ENCODE measurements at regions of chr12 and their contacts with region 1.

Region 1: DNA sequence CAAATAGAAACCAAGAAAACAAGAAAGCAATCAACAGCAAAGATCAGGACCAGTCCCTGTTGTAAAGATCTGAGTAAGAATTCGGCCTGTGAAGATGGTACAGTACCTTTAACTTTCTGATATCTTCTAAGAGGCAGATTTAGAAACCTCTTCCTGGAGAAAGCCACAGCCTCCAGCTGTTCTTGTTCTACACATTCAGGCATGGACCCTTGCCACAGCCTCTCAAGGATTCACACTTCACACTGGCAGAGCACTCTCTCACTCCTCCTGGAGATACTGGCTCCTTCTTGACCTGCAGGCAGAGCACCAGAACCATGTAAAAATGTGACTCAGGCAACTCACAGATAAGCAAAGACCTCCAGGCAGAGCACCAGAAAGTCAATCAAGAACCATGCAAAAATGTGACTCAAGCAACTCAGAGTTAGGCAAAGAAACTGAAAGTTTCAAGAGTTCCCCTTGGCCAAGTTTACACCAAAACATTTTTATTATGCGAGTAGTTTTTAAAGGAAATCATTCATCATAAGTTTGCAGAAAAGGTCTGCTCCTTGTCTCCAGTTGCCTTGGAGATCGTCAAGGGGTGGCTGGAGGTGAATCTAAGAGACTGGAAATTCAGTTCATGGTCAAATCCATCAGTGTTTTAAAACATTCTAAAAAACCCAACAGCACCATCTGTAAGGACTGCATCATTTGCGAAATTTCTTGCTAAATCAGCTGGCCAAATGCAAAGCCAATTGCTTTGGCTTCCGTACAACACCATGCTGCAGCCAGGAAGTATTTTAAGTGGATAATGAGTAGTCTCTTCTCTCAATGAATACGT is 119.3 kb upstream of the MDM1 start:
- DNase-seq: peak; percentile 71
- H3K4me3 Mint-ChIP-seq: peak overlapping the region; percentile 45
- H3K27ac Mint-ChIP-seq: peak overlapping the region; percentile 96
- H3K4me1 Mint-ChIP-seq: peaks cover 91% of the 10 kb centered on the region
- H3K27me3 Mint-ChIP-seq: no peaks in the 10 kb centered on the region

Region 2: DNA sequence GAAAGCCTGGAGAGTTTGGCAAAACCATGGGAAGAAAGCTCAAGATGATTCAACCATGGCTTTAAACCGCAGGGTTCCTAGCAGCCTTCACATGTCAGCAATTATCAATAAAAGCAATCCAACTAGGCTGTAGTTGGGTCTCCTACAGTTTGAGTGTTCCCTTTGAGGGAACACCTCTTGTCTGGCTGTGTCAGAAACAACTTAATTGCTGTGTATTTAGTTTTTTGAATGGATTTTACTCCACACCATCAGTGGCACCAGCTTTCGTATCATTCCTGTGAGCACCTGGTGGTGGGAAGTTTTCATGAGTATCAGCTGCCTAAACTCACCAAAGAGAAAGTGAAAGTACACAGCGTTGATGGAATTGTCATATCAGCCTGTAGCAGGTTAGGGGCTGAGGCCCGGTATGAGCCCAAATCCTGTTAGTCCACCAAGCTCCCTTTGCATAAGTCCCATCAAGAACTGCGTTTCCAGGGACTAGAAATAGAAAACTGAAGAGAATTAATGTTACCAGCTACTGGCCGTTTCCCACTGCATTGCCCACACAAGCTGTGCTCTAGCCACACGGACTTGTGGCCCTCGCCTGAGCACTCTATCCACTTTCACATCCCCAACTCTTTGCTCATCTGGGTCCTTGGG is 214.9 kb before region 1 on chr12:
- CTCF ChIA-PET with region 1: no interaction called
- intact Hi-C with region 1: loop called (anchors 2 kb)
- DNase-seq: peak; percentile 43
- H3K4me3 Mint-ChIP-seq: peak overlapping the region; percentile 75
- H3K27ac Mint-ChIP-seq: peak overlapping the region; percentile 57
- H3K4me1 Mint-ChIP-seq: peaks cover 48% of the 10 kb centered on the region
- H3K27me3 Mint-ChIP-seq: no peaks in the 10 kb centered on the region

Region 3: GRCh38 chr12:68374307-68374982 is 77.0 kb before region 1 on chr12:
- CTCF ChIA-PET with region 1: interaction called, 3 read pairs
- intact Hi-C with region 1: loop called (anchors 1 kb)
- DNase-seq: peak; percentile 77
- H3K4me3 Mint-ChIP-seq: no peak overlapping the region
- H3K27ac Mint-ChIP-seq: peak overlapping the region; percentile 89
- H3K4me1 Mint-ChIP-seq: peaks cover 46% of the 10 kb centered on the region
- H3K27me3 Mint-ChIP-seq: peaks cover 3% of the 10 kb centered on the region

Region 4: GRCh38 chr12:68557011-68557730 is 105.7 kb after region 1 on chr12:
- CTCF ChIA-PET with region 1: interaction called, 4 read pairs
- intact Hi-C with region 1: loop called (anchors 1 kb)
- DNase-seq: no peak
- H3K4me3 Mint-ChIP-seq: no peak overlapping the region
- H3K27ac Mint-ChIP-seq: no peak overlapping the region
- H3K4me1 Mint-ChIP-seq: peaks cover 34% of the 10 kb centered on the region
- H3K27me3 Mint-ChIP-seq: no peaks in the 10 kb centered on the region

Region 5: GRCh38 chr12:68794653-68795251 is 343.3 kb after region 1 on chr12:
- CTCF ChIA-PET with region 1: no interaction called
- intact Hi-C with region 1: no loop called
- DNase-seq: no peak
- H3K4me3 Mint-ChIP-seq: no peak overlapping the region
- H3K27ac Mint-ChIP-seq: no peak overlapping the region
- H3K4me1 Mint-ChIP-seq: no peaks in the 10 kb centered on the region
- H3K27me3 Mint-ChIP-seq: no peaks in the 10 kb centered on the region

Region 6: GRCh38 chr12:68807576-68808387 is 356.3 kb after region 1 on chr12 and contains the start of gene MDM2:
- CTCF ChIA-PET with region 1: no interaction called
- intact Hi-C with region 1: loop called (anchors 5 kb)
- DNase-seq: peak; percentile 95
- H3K4me3 Mint-ChIP-seq: peak within 1 kb of the TSS; percentile 97
- H3K27ac Mint-ChIP-seq: peak within 1 kb of the TSS; percentile 98
- H3K4me1 Mint-ChIP-seq: peaks cover 24% of the 10 kb centered on the region
- H3K27me3 Mint-ChIP-seq: no peaks in the 10 kb centered on the region
- total RNA-seq, gene MDM2: 165 to 166 TPM

Region 7: DNA sequence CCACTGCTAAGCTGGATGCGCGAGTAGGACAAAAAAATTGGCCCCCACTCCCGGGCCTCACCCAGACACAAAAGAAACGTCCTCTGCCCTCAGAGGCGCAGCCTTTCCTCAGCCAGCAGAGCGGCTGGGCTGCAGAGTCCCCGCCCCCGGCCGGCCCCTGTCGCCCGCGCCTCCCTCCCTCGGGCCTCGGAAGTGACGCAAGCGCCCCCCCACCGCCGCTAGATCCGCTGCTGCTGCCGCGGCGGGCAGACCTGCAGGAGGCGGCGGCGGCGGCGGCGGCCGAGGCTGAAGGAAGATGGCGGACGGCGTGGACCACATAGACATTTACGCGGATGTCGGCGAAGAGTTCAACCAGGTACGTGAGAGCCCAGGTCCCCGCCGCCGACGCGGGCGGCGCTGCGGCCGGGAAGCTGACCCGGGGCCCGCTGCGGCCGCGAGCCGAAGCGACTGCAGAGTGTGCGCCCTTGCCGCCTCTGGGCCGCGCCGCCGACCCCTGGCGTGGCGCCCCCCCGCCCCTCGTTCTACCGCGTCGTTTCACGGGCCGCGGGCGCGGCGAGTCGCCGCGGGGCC is 788.0 kb after region 1 on chr12 and contains the start of gene CPSF6:
- CTCF ChIA-PET with region 1: no interaction called
- intact Hi-C with region 1: loop called (anchors 10 kb)
- DNase-seq: peak; percentile 97
- H3K4me3 Mint-ChIP-seq: peak within 1 kb of the TSS; percentile 91
- H3K27ac Mint-ChIP-seq: peak within 1 kb of the TSS; percentile 98
- H3K4me1 Mint-ChIP-seq: peaks cover 47% of the 10 kb centered on the region
- H3K27me3 Mint-ChIP-seq: no peaks in the 10 kb centered on the region
- total RNA-seq, gene CPSF6: 73.7 to 75.7 TPM

Measured in activated naive CD4-positive, alpha-beta T cell treated with anti-CD3 and anti-CD28 coated beads for 36 hours (primary cell).